PC-9 (cell line): ENCODE measurements at regions of chr2 and their contacts with region 1.

Region 1: GRCh38 chr2:97348277-97348676 is 235.3 kb downstream of the ANKRD36 start:
- DNase-seq: peak; percentile 15 to 42
- H3K4me3 ChIP-seq: peak overlapping the region; percentile 1; the same call in 1 of the 2 replicates
- H3K27ac ChIP-seq: 0 out of 2 replicates have a peak overlapping the region, but pooled peaks have one; percentile 16
- H3K4me1 ChIP-seq: peaks cover 16% of the 10 kb centered on the region
- H3K27me3 ChIP-seq: no peaks in the 10 kb centered on the region
- CTCF ChIP-seq: no peak

Region 2: DNA sequence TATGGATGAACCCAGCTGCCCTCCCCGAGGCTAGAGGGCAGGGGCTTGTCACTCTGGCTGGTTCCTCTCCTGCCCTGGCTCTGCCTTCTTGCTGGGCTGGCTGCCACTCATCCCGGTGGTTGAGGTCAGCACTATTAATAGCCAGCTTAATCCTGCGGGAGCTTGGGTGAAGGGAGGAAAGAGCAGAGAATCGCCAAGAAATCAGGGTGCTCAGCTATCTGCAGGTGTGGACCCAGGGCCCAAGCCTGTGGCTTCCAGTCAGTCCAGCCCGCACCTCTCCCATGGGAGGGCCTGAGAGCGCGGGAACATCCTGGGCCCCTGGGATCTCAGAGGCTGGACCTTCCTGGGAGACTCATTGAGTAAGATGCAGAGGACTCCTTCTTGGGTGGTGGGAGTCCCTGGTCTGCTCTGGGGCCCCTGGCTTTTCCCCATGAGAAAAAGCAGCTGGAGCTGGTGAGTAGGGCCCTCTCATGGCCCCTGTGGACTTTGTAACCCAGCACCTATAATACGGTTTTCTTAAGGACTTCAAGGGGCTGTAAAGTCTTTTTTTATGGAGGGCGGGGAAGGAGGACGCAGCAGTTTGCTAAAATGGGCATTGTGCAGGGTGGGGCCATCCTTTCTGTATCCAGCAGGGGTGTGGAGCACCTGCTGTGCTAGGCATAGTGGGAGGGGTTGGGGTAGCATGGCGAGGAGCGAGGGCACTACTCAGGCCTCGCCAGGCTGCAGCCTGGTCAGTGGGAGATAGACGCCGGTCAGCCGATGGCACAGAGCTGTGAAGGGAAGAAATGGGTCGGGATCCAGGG is 559.6 kb before region 1 on chr2:
- CTCF ChIA-PET with region 1: no interaction called
- POLR2A ChIA-PET with region 1: no interaction called
- intact Hi-C with region 1: no loop called
- DNase-seq: peak; percentile 51 to 67
- H3K4me3 ChIP-seq: no peak overlapping the region
- H3K27ac ChIP-seq: peak overlapping the region; percentile 73
- H3K4me1 ChIP-seq: peaks cover 42% of the 10 kb centered on the region
- H3K27me3 ChIP-seq: no peaks in the 10 kb centered on the region
- CTCF ChIP-seq: no peak

Region 3: GRCh38 chr2:97675430-97676113 is 327.3 kb after region 1 on chr2:
- CTCF ChIA-PET with region 1: interaction called, 12 read pairs
- POLR2A ChIA-PET with region 1: no interaction called
- intact Hi-C with region 1: no loop called
- DNase-seq: no peak
- H3K4me3 ChIP-seq: no peak overlapping the region
- H3K27ac ChIP-seq: no peak overlapping the region
- H3K4me1 ChIP-seq: no peaks in the 10 kb centered on the region
- H3K27me3 ChIP-seq: no peaks in the 10 kb centered on the region
- CTCF ChIP-seq: no peak